ENCODE measurements at regions of chr19 and their contacts with region 1.

Region 1: DNA sequence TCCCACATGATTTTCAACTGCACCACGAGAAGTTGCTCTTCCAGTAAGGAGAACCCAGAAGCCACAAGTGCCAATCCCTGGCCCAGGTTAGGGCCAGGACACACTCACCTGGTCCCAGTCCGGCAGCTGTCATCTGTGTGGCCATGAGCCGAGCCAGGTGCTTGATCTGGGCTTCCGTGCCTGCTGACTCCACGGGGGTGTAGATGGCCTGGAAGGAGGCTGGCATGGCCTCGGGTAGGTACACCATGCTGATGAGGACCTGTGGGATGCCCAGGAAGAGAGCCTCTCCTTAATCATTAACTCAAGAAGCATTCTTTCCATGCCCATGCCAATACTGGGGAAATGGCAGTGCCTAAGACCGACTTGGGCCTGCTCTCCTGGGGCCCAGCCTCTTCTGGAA is 19.9 kb upstream of the RSPH6A start:
- DNase-seq: no peak
- ATAC-seq: peak; percentile 13 to 33; a peak in 1 of 6 replicates
- H3K4me3 ChIP-seq: no peak overlapping the region
- H3K27ac ChIP-seq: no peak overlapping the region
- H3K4me1 ChIP-seq: no peaks in the 10 kb centered on the region
- CTCF ChIP-seq: no peak
- EP300 ChIP-seq: no peak
- POLR2A ChIP-seq: no peak
- RAD21 ChIP-seq: no peak

Region 2: DNA sequence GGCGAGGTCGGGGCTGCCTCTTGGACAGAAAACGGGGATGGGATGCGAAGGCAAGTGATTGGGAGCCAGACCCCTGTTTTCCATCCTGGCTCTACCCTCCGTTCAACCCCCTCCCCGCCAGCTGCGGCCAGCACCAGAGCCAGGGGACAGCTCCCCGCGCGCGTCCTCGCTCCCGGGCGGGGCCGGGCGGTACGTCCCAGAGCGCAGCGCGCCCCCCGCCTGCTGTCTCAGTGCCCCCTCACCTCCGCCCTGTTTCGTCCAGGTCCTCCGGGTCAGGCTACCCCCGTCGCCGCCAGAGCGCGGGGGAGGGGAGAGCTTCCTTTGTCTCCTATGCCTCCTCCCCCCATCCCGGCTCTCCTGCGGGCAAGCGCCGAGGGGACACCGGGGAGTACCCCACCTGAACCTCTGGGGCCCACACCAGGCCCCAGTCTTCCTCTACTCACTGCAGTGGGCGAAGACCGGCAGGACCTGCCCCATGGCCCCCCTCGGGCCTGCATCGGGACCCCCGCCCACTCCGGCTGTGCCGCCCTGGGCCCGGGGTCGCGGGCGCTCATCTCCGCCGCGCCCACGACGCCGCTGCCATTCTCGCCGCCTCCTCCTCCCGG is 338.5 kb before region 1 on chr19:
- CTCF ChIA-PET with region 1: no interaction called
- POLR2A ChIA-PET with region 1: no interaction called
- DNase-seq: no peak
- ATAC-seq: peak; percentile 22 to 46
- H3K4me3 ChIP-seq: peak overlapping the region; percentile 75
- H3K27ac ChIP-seq: peak overlapping the region; percentile 61 to 83; a peak in 5 of 6 replicates
- H3K4me1 ChIP-seq: peaks cover 20% of the 10 kb centered on the region
- CTCF ChIP-seq: no peak
- EP300 ChIP-seq: no peak
- POLR2A ChIP-seq: no peak
- RAD21 ChIP-seq: no peak

Region 3: DNA sequence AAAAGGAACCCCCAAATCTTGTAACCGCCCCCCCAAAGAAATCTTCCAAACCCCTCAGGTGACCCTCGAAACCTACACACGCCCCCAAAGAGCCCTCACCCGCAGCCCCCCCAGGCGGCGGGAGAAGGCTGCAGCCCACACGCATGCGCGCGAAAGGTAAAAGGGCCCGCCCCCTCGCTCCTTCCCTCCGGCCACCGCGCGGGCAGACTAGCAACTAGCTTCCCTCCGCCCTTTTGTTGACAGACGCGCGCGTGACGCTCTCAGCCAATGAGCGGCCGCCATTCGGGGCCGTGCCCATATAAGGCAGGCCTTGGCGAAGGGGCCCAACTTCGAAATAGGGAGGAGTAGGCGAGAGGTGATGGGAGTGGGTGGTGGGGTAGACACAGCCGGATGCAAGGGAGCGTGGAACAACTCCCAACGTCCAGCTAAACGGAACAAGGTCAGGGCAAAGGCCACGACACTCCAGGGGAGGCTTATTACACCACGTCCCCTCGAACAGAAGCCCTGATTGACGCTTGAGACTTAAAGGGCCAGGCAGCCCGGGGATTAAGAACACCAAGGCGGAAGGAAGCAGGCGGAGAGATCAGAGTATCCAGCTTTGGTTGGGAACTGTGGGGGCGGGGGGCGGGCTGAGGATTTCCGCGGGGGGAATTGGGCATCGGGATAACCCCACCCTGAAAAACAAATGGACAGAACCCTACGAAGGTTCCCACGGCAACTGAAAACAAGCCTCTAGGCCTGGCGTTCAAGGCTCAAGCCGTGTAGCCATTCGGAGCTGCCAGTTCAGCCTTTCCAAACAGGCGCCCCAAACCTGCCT is 117.6 kb before region 1 on chr19:
- CTCF ChIA-PET with region 1: no interaction called
- POLR2A ChIA-PET with region 1: no interaction called
- DNase-seq: peak; percentile 99 to 100
- ATAC-seq: peak; percentile 92 to 97
- H3K4me3 ChIP-seq: peak overlapping the region; percentile 80
- H3K27ac ChIP-seq: peak overlapping the region; percentile 92 to 96
- H3K4me1 ChIP-seq: peaks cover 39% of the 10 kb centered on the region
- CTCF ChIP-seq: no peak; the same call in 2 of the 3 replicates
- EP300 ChIP-seq: peak in 1 of 2 experiments; percentile 42; a peak in 1 of 5 replicates
- POLR2A ChIP-seq: peak; percentile 41
- RAD21 ChIP-seq: no peak

Region 4: DNA sequence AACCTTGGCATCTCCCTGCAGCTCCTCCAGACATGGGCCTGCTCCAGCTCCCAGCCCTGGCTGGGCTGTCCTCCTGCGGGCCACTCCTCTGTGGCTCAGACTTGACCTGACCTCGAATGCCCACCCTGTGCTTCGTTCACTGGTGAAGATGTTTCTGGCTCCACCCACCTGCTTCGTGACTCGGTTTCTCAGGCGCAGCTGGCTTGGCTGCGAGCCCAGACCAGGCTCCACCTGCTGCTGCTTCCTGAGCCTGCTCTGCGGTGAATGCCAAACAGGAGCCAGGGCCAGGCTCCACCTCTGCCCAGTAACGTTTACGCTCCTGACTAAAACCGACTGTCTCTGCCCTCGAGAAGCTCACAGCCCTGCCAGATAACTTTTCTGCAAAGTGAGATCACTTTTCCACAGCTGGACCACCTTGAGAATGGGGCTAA is 10.9 kb before region 1 on chr19:
- CTCF ChIA-PET with region 1: interaction called, 2,204 read pairs
- POLR2A ChIA-PET with region 1: no interaction called
- DNase-seq: no peak
- ATAC-seq: no peak
- H3K4me3 ChIP-seq: no peak overlapping the region
- H3K27ac ChIP-seq: no peak overlapping the region
- H3K4me1 ChIP-seq: no peaks in the 10 kb centered on the region
- CTCF ChIP-seq: no peak
- EP300 ChIP-seq: no peak
- POLR2A ChIP-seq: no peak
- RAD21 ChIP-seq: no peak

Region 5: DNA sequence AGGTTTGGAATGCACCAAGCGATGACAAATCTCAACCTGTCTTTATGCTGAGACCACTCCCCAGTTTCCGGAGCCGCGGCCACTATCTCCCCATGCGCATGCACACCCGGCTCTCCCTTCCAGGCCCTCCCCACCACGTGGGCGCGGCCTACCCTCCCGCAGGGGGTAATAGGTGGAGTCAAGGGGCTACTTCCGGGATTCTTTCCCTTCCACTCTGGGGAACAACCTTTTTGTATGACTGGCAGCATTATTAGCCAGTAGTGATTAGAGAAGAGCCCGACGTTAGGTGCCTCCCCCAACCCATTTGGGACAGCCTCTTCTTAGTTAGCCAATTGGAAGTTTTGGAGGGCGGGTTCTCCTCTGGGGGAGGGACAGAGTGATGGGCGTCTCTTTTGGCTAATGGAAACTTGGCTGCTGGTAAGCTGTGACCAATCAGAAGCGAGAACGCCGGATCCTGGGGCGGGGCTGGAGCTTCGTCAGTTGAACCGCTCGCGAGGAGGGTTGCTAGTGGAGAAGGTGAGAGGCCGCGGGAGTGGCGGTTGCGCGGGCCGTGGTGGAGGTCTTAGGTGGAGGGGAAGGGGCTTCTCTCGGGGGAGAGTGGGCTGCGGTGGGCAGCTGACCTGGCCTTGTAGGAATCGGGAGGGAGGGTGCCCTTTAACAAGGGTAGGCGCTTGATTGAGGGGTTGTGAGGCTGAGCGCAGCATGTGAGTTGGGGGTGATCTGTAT is 160.2 kb after region 1 on chr19 and contains the start of gene CCDC61:
- CTCF ChIA-PET with region 1: no interaction called
- POLR2A ChIA-PET with region 1: no interaction called
- DNase-seq: peak; percentile 99 to 100
- ATAC-seq: peak; percentile 96 to 98
- H3K4me3 ChIP-seq: peak within 1 kb of the TSS; percentile 57
- H3K27ac ChIP-seq: peak within 1 kb of the TSS; percentile 72 to 88
- H3K4me1 ChIP-seq: peaks cover 5% of the 10 kb centered on the region
- CTCF ChIP-seq: no peak
- EP300 ChIP-seq: no peak
- POLR2A ChIP-seq: peak; percentile 93
- RAD21 ChIP-seq: no peak
- polyA plus RNA-seq, gene CCDC61: 3.2 and 4.1 TPM in 2 replicates